ENCODE measurements at regions of chr5 and their contacts with region 1.

Region 1: GRCh38 chr5:38601844-38602424 is 45.5 kb upstream of the LIFR start:
- DNase-seq: no peak
- ATAC-seq: peak; percentile 67 to 81 (median 74)
- H3K4me3 ChIP-seq: no peak overlapping the region
- H3K27ac ChIP-seq: peak overlapping the region; percentile 83
- H3K4me1 ChIP-seq: peaks cover 34% of the 10 kb centered on the region
- H3K27me3 ChIP-seq: no peaks in the 10 kb centered on the region
- CTCF ChIP-seq: no peak

Region 2: DNA sequence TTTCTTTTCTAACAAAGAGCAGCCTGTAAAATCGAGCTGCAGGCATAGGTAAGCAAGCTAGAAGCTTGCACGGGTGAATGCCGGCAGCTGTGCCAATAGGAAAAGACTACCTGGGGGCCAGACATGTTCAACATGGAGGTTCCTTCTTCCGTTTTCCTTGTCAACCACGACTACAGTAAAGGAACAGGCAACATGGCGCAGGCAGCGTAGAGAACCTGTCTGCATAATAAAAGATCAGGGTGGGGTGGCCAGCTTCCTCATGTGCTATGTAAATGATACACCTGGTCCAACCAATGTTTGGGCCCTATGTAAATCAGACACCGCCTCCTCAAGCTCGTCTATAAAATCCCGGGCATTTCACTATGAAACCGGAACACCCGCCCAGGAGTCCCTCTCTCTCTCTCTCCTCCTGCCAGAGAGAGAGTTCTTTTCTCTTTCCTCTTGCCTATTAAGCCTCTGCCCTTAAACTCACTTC is 58.3 kb after region 1 on chr5:
- intact Hi-C with region 1: loop called in 1 of 2 experiments (anchors 5 kb)
- DNase-seq: peak in 1 of 2 donors; percentile 66
- ATAC-seq: peak; percentile 85 to 97 (median 96)
- H3K4me3 ChIP-seq: peak overlapping the region; percentile 61
- H3K27ac ChIP-seq: peak overlapping the region; percentile 84
- H3K4me1 ChIP-seq: peaks cover 31% of the 10 kb centered on the region
- H3K27me3 ChIP-seq: no peaks in the 10 kb centered on the region
- CTCF ChIP-seq: no peak